Right ventricle myocardium inferior (tissue), 1 donor: ENCODE measurements at regions of chr17 and their contacts with region 1.

Region 1: GRCh38 chr17:979538-980405 is at the start of gene NXN:
- DNase-seq: peak; percentile 94
- ATAC-seq: peak; percentile 96
- total RNA-seq, gene NXN: 18.5 TPM

Region 2: GRCh38 chr17:409848-410545 is 569.8 kb before region 1 on chr17:
- intact Hi-C with region 1: loop called (anchors 2 kb)
- DNase-seq: peak; percentile 100
- ATAC-seq: peak; percentile 96

Region 3: GRCh38 chr17:794876-795275 is 184.9 kb before region 1 on chr17:
- intact Hi-C with region 1: loop called (anchors 1 kb)
- DNase-seq: peak; percentile 91
- ATAC-seq: peak; percentile 72

Region 4: DNA sequence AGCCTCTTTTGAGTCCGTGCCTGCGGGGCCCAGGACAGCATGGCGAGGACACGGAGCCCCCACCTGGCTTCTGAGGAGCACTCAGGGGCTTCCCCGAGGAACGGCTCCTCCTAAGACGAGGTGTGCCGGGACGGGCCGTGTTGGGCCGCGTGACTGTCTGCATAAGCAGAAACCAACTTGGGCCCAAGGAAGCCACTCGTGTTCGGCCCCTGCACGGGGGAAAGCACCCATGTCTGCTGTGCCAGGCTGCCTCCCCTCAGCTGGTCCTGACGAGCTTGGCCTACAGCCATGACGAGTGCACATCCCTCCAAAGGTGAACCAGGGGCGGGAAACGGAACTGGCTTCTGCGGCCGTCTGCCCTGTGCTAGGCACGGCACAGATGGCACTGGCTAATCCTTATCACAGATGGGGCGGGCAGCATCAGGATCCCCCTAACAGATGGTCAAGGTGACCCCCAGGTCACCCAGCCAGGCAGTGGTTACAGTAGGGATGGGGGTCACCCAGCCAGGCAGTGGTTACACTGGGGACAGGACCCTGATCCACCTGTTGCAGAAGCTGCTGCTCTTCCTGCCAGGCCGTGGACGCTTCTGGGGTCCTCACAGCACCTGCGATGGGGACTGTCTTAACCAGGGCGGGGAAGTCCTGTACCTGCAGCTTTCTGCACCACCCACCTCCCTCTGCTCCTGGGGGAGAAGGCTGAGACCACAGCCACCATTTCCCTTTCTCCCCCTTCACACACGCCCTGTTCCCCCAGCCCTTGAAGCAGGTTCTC is 172.1 kb before region 1 on chr17:
- intact Hi-C with region 1: no loop called
- DNase-seq: no peak
- ATAC-seq: no peak

Region 5: DNA sequence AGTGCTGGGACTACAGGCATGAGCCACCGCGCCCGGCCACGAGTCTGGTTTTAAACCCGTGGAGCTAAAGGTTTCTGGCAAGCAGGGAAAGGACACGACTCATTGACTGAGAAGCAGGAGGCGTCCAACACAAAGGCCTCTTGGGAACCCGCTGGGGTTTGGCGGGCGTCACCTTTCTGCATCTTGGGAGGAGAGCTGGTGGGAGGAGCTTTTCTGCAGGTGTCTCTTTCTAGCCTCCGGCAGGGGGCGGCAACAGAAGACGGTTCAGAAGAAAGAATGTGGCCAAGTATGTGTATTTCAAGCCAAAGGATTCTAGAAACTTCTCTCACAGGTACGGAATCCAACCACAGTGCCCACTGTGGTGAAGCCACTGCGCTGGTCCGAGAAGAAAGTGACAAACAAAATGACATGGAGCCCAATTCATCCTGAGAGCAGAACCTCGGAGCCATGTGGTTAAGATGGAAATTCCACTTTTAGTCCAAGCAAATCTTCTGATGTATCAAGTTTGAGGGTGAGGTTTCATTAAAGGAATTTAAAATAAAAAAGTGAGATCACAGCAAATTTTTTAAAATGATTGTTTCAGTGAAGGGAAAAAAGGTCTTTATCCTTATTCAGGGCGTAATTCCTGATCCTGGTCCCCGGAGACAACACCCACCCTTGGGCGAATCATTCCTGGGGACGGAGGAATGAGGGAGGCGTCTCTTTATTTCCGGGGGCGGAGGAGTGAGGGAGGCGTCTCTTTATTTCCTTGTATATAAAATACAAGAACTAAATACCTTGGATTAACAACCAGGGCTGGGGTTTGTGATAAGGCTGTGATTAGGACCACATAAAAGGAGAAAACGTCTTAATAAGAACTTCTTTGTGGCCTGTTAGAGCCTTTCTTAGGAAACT is 100.0 kb before region 1 on chr17:
- intact Hi-C with region 1: loop called (anchors 2 kb)
- DNase-seq: peak; percentile 84
- ATAC-seq: peak; percentile 54

Region 6: GRCh38 chr17:915538-916201 is 64.1 kb before region 1 on chr17:
- intact Hi-C with region 1: loop called (anchors 5 kb)
- DNase-seq: no peak
- ATAC-seq: peak; percentile 55